Body of pancreas (tissue), 4 donors: ENCODE measurements at regions of chr18 and their contacts with region 1.

Region 1: GRCh38 chr18:4106407-4107033 is 348.6 kb downstream of the DLGAP1 start:
- DNase-seq: peak; percentile 55 to 76 (median 63)
- ATAC-seq: peak; percentile 60
- H3K4me3 ChIP-seq: no peak overlapping the region
- H3K27ac ChIP-seq: no peak overlapping the region
- H3K4me1 ChIP-seq: no peaks in the 10 kb centered on the region
- H3K27me3 ChIP-seq: no peaks in the 10 kb centered on the region
- CTCF ChIP-seq: peak; percentile 44 to 74 (median 68)
- POLR2A ChIP-seq: no peak

Region 2: GRCh38 chr18:4251873-4252272 is 145.4 kb after region 1 on chr18:
- intact Hi-C with region 1: no loop called
- DNase-seq: no peak
- ATAC-seq: no peak
- H3K4me3 ChIP-seq: no peak overlapping the region
- H3K27ac ChIP-seq: no peak overlapping the region
- H3K4me1 ChIP-seq: no peaks in the 10 kb centered on the region
- H3K27me3 ChIP-seq: no peaks in the 10 kb centered on the region
- CTCF ChIP-seq: no peak
- POLR2A ChIP-seq: no peak

Region 3: DNA sequence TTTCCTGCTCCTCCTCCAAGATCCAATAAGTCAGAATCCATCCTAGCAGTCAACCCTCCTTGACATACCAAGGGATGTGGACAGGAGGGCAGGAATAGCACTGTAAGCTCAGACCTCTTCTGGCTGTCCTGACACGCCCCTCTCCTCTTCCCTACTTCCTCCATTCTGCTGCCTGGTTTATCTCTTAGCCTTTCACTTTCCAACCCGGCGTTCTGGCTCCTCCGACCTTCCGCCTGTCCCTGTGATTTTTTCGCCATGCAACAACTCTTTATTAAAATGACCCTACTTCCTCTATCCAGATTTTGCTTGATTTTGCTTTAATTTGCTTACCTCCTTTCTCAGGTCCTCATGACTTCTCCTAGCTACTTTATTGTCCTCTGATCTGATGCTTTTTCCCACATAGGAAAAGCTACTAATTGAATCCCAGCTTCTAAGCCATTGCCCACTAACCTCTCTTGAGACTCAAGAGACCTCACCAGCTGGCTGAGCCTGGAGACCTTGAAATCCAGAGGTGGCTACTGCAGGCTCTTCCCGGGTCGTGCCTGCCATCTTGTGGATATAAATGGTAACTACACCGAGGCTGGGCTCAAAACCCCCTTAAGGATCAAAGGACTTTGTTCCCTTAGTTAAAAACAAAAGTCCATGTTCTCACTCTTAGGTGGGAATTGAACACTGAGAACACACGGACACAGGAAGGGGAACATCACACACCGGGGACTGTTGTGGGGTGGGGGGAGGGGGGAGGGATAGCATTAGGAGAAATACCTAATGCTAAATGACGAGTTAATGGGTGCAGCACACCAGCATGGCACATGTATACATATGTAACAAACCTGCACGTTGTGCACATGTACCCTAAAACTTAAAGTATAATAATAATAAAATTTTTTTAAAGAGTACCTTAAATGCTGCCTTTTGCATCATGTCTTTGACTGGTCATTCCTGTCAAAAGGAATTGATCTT is 951.1 kb after region 1 on chr18:
- intact Hi-C with region 1: loop called (anchors 10 kb)
- DNase-seq: peak; percentile 61 to 71 (median 65)
- ATAC-seq: peak; percentile 72
- H3K4me3 ChIP-seq: no peak overlapping the region
- H3K27ac ChIP-seq: no peak overlapping the region
- H3K4me1 ChIP-seq: no peaks in the 10 kb centered on the region
- H3K27me3 ChIP-seq: peaks cover 0 to 3% of the 10 kb centered on the region in 2 donors
- CTCF ChIP-seq: peak; percentile 57 to 79 (median 69)
- POLR2A ChIP-seq: no peak